ENCODE measurements at regions of chr15 and their contacts with region 1.

Region 1: DNA sequence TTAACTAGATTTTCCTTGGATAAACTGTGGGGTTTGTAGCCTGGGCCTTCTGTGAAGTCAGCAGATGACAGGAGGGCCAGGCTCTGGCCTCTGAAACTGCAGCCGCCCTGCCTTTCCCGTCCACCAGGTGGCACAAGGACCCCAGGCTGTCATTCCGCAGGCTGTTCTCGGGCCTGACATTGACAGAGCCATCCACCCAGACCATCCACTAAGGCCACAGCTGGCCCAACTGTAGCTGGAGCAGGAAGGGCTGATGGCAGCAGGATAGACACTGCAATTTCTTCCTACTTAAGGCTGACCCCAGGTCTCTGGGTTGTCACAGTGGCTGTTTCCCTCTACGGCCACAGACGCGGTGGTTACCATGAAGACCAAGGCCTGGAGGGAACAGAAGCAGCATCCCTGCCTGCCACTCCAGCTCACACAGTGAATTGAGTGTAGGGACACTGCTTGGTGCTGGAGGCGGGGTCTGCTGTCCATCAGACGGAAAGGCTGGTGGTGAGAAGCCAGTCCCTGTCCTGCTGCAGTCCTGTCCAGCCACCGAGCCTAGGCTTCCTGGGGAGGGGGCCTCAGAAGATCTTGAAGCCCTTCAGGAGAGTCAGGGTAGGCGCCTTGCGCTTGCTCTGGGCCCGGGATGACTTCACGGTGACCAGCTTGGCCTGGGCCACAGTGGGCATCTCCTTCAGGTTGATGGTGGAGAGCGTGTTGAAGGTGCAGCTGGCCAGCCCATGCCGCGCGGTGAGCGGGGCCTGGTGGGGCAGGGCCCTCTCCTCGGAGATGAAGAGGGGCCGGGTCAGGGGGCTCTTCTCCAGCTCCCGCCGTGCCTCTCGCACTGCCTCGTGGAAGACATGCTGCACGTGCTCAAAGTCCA is 9.4 kb downstream of the SLC51B start:
- DNase-seq: peak; percentile 74 to 89
- ATAC-seq: peak; percentile 88 to 94 (median 92)
- H3K4me3 ChIP-seq: no peak overlapping the region
- H3K27ac ChIP-seq: peak overlapping the region; percentile 36
- H3K4me1 ChIP-seq: peaks cover 2% of the 10 kb centered on the region
- H3K27me3 ChIP-seq: no peaks in the 10 kb centered on the region
- CTCF ChIP-seq: peak; percentile 92

Region 2: DNA sequence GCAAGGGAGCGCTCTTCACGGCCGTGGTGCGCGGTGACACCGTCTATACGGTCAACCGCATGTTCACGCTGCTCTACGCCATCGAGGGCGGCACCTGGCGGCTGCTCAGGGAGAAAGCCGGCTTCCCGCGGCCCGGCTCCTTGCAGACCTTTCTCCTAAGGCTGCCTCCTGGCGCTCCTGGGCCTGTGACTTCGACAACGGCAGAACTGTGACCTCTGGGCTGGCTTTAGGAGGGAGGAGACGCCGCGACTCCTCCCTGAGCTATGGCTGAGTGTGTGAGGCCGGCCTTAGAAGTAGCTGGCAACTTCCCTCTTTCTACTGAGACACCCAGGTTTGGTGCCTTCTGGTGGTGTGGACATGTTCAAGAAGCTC is 23.4 kb after region 1 on chr15:
- intact Hi-C with region 1: loop called in 1 of 2 experiments (anchors 1 kb)
- DNase-seq: peak; percentile 74 to 92
- ATAC-seq: peak; percentile 78 to 89 (median 87)
- H3K4me3 ChIP-seq: peak overlapping the region; percentile 52
- H3K27ac ChIP-seq: peak overlapping the region; percentile 87
- H3K4me1 ChIP-seq: peaks cover 34% of the 10 kb centered on the region
- H3K27me3 ChIP-seq: no peaks in the 10 kb centered on the region
- CTCF ChIP-seq: peak; percentile 60

Region 3: DNA sequence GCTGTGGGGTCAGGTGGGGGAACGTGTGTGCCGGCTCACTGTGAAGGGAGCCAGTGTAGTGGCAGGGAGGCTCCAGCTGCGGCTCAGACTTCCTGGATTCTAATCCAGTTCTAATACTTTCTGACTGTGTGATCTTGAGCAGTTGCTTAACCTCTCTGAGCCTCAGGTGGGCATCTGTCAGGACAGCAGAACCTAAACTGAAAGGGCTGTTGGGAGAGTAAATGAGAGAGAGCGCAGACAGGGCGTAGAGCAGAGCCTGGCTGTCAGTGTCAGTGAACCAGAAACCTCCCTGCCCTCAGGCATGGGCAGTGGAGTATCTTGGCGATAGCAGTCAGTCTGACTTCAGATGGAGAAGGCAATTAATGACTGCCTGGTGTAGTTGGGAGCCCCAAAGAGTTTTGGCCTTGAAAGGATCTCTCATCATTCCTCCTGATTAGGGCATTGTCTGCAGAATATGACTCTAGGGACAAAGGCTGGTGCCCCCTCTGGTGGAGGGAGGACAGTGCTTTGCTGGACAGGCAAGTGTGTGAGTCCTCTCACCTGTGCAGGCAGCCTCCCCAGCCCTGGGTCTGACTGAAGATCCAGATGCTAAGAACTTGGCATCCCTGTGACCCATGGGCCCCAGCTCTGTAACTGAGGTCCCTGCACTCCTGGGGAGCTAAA is 31.6 kb after region 1 on chr15:
- intact Hi-C with region 1: loop called in 1 of 2 experiments (anchors 5 kb)
- DNase-seq: peak in 1 of 2 donors; percentile 55
- ATAC-seq: peak; percentile 29 to 44 (median 37)
- H3K4me3 ChIP-seq: no peak overlapping the region
- H3K27ac ChIP-seq: peak overlapping the region; percentile 87
- H3K4me1 ChIP-seq: peaks cover 59% of the 10 kb centered on the region
- H3K27me3 ChIP-seq: no peaks in the 10 kb centered on the region
- CTCF ChIP-seq: peak; percentile 40

Region 4: DNA sequence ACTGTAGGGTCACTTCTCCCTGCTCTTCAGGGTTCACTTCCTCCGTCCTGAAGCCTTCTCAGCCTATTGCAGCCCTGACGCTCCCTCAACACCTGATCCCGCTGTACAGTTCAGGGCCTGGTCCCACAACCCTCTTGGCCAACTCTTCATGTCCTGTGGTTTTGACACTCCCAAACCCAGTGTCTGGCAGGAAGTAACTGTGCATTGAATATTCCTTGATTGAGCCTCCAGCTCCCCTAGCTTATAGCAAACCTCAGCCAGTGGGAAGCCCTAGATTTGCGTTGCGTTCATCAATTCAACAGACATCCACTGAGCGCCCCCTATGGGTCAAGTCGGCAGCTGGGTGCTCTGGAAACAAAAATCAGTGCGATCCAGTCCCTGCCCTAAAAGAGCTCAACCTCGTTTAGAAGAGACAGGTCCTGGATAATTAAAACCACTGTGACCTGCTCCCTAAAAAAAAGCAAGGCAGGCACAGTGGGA is 46.9 kb after region 1 on chr15:
- intact Hi-C with region 1: loop called in 1 of 2 experiments (anchors 1 kb)
- DNase-seq: peak; percentile 70 to 81
- ATAC-seq: peak; percentile 63 to 83 (median 68)
- H3K4me3 ChIP-seq: no peak overlapping the region
- H3K27ac ChIP-seq: no peak overlapping the region
- H3K4me1 ChIP-seq: peaks cover 4% of the 10 kb centered on the region
- H3K27me3 ChIP-seq: no peaks in the 10 kb centered on the region
- CTCF ChIP-seq: peak; percentile 72

Region 5: GRCh38 chr15:65212097-65212496 is 157.5 kb after region 1 on chr15:
- intact Hi-C with region 1: no loop called
- DNase-seq: no peak
- ATAC-seq: peak in 3 of 4 donors; percentile 30 to 37 (median 32)
- H3K4me3 ChIP-seq: no peak overlapping the region
- H3K27ac ChIP-seq: peak overlapping the region; percentile 53
- H3K4me1 ChIP-seq: peaks cover 18% of the 10 kb centered on the region
- H3K27me3 ChIP-seq: no peaks in the 10 kb centered on the region
- CTCF ChIP-seq: peak; percentile 18

Region 6: DNA sequence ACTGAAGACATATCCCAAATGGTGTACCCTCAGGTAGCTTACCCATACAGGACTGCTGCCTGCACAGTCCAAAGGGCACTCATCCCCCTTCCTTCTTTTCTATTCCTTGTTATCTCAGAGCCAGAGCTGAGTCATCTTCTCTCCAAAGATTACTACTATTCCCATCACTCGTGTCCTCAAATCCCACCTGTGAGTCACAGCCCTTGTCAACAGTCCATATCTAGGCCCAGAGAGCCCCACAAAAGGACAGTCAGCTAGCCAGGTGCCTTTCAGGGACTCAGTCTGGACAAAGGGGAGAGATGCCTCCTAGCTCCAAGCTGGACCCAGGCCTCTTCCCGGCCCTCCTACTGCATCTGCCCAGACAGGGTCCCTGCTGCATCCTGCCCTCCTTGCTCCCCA is 221.2 kb after region 1 on chr15:
- intact Hi-C with region 1: loop called in 1 of 2 experiments (anchors 5 kb)
- DNase-seq: no peak
- ATAC-seq: peak; percentile 59 to 81 (median 72)
- H3K4me3 ChIP-seq: no peak overlapping the region
- H3K27ac ChIP-seq: peak overlapping the region; percentile 32
- H3K4me1 ChIP-seq: peaks cover 12% of the 10 kb centered on the region
- H3K27me3 ChIP-seq: no peaks in the 10 kb centered on the region
- CTCF ChIP-seq: no peak

Measured in psoas muscle (tissue), 8 donors.